ENCODE measurements at regions of chr2 and their contacts with region 1.

Region 1: DNA sequence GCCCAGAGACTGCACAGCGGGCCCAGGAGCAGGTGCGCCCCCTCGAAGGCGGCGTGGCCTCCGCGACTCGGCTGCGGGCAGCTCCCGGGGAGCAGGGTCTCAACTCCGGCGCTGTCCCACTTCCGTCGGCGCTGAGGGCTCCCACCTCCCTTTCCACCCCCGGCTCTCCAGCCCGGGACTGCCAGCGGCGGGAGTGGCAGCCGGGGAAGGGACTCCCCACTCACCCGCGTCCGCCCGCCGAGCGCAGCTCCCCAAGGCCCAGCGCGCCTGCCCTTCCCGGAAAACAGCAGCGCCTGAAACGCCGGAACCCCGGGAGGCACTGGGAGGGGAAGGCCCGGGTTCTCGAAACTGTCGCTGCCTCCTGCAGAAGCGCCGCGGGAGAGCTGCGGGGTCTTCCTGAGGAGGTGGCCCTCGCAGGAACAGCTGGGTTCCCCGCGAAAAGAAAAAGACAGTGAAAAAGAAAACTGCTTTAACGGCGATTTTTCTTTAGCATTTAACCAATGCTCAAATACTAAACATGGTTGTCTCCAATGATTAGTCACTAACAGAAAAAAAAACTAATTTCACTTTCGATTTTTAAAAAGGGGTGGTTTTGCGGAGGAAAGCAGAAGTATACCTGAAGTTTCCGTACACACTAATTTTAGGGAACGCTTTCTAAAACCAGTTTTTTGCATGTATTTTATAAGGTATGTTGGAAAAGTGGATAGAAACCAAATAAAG is at the start of gene NMI:
- DNase-seq: peak; percentile 76
- ATAC-seq: peak; percentile 74
- H3K4me3 ChIP-seq: peak within 1 kb of the TSS; percentile 86
- H3K27ac ChIP-seq: peak within 1 kb of the TSS; percentile 98
- H3K4me1 ChIP-seq: peaks cover 4% of the 10 kb centered on the region; the same call in 1 of the 2 replicates
- H3K27me3 ChIP-seq: no peaks in the 10 kb centered on the region
- CTCF ChIP-seq: no peak
- EP300 ChIP-seq: no peak
- POLR2A ChIP-seq: peak; percentile 81
- RAD21 ChIP-seq: no peak
- polyA plus RNA-seq, gene NMI: 43.3 to 48.4 TPM

Region 2: DNA sequence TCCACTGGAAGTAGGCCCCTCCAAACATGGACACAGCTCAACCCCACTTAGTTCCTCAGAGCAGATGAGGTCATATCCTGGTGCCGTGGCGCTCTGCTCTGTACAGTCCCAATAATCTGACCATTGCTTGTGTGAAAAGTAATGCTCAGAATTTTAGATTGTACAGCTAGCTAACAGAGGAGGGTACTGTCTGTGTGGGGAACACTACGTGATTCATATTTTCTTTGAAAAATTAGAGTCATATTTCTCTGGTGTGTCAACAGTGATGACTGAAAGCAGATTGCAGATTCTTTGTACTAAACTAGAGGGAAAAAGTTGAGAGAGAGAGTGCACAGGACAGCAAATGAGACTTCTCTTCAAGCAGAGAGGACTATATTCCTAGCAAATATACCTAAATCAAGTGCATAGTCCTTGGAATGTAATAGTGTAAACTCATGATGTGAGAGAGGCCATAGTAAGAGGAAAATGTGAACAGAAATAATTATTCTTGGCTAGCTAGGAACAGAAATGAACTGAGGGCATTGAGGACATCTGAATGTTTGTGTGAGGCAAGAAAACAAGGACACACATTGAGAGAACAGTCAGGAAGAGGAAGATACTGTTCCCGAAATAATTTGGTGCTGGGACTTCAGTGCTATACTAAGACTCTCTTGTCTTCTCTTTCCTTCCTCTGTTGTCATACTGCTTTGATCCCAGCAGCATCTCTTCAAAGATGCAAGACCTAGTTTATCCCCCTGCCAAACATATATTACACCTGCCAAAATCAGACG is 645.0 kb before region 1 on chr2:
- CTCF ChIA-PET with region 1: no interaction called
- POLR2A ChIA-PET with region 1: no interaction called
- RAD21 ChIA-PET with region 1: no interaction called
- SMC1A ChIA-PET with region 1: no interaction called
- in situ Hi-C with region 1: no loop called
- intact Hi-C with region 1: no loop called
- DNase-seq: no peak
- ATAC-seq: no peak
- H3K4me3 ChIP-seq: no peak overlapping the region
- H3K27ac ChIP-seq: no peak overlapping the region
- H3K4me1 ChIP-seq: no peaks in the 10 kb centered on the region
- H3K27me3 ChIP-seq: no peaks in the 10 kb centered on the region; a peak in 1 of 4 replicates
- CTCF ChIP-seq: no peak
- EP300 ChIP-seq: no peak
- POLR2A ChIP-seq: no peak
- RAD21 ChIP-seq: no peak

Region 3: DNA sequence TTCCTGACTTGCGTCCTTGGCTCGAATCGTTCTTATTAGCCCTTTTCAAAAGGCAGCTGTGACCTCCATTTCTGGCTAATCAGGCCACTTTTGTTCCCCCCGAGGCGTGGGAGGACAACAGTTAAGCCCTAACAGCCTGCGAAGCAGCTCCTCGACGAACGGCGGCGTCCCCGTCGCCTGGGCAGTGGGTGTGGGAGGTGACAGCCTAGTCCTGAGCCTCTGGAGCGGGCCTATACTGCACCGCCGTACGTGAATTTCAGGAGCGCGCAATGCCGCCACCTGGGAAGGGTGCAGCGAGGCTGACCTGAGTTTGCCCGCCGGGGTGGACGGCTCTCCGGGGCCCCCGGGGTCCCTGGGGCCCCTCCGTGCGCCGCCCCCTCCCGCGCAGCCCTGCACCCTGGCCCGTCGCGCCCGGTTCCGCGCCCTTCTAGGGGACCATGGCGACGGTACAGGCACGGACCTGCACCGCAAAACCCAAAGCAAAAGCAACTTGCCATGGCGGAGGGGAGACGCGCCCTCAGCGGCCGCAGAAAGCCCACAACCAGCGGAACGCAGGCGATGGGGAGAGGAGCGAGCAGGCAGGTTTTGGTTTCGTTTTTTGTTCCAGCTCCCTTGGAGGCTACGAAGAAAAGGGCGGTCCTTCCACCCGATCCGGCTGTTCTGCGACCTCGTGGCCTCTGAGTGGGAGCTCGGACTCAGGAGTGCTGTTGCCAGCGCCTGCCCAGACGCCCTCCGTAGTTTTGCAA is 28.1 kb before region 1 on chr2 and contains the start of gene RBM43:
- CTCF ChIA-PET with region 1: interaction called, 5 read pairs
- POLR2A ChIA-PET with region 1: interaction called, 9 read pairs
- RAD21 ChIA-PET with region 1: interaction called, 15 read pairs
- SMC1A ChIA-PET with region 1: interaction called, 3 read pairs
- in situ Hi-C with region 1: no loop called
- intact Hi-C with region 1: loop called (anchors 1 kb)
- DNase-seq: peak; percentile 59
- ATAC-seq: peak; percentile 95
- H3K4me3 ChIP-seq: peak within 1 kb of the TSS; percentile 84
- H3K27ac ChIP-seq: peak within 1 kb of the TSS; percentile 86
- H3K4me1 ChIP-seq: no peaks in the 10 kb centered on the region
- H3K27me3 ChIP-seq: no peaks in the 10 kb centered on the region
- CTCF ChIP-seq: peak in 1 of 3 experiments; percentile 21; a peak in 1 of 6 replicates
- EP300 ChIP-seq: no peak
- POLR2A ChIP-seq: peak; percentile 88
- RAD21 ChIP-seq: no peak
- polyA plus RNA-seq, gene RBM43: 0.86 to 0.93 TPM

Region 4: GRCh38 chr2:151363709-151364108 is 74.2 kb after region 1 on chr2:
- CTCF ChIA-PET with region 1: no interaction called
- POLR2A ChIA-PET with region 1: interaction called, 3 read pairs
- RAD21 ChIA-PET with region 1: interaction called, 6 read pairs
- SMC1A ChIA-PET with region 1: interaction called, 3 read pairs
- in situ Hi-C with region 1: no loop called
- intact Hi-C with region 1: loop called (anchors 1 kb)
- DNase-seq: peak; percentile 45
- ATAC-seq: peak; percentile 88
- H3K4me3 ChIP-seq: no peak overlapping the region
- H3K27ac ChIP-seq: no peak overlapping the region
- H3K4me1 ChIP-seq: no peaks in the 10 kb centered on the region
- H3K27me3 ChIP-seq: no peaks in the 10 kb centered on the region
- CTCF ChIP-seq: no peak
- EP300 ChIP-seq: 0 out of 4 replicates have a peak, but pooled peaks of 1 of the 2 experiments have one; percentile 14
- POLR2A ChIP-seq: no peak
- RAD21 ChIP-seq: no peak

Region 5: GRCh38 chr2:151409601-151410484 is 120.3 kb after region 1 on chr2 and contains the start of gene RIF1:
- CTCF ChIA-PET with region 1: no interaction called
- POLR2A ChIA-PET with region 1: interaction called, 5 read pairs
- RAD21 ChIA-PET with region 1: no interaction called
- SMC1A ChIA-PET with region 1: interaction called, 5 read pairs
- in situ Hi-C with region 1: loop called (anchors 25 kb)
- intact Hi-C with region 1: loop called (anchors 1 kb)
- DNase-seq: peak; percentile 45
- ATAC-seq: peak; percentile 95
- H3K4me3 ChIP-seq: peak within 1 kb of the TSS; percentile 97
- H3K27ac ChIP-seq: peak within 1 kb of the TSS; percentile 91
- H3K4me1 ChIP-seq: no peaks in the 10 kb centered on the region
- H3K27me3 ChIP-seq: no peaks in the 10 kb centered on the region; a peak in 1 of 4 replicates
- CTCF ChIP-seq: peak; percentile 39 to 74 (median 41)
- EP300 ChIP-seq: no peak
- POLR2A ChIP-seq: peak; percentile 83
- RAD21 ChIP-seq: no peak
- polyA plus RNA-seq, gene RIF1: 6.3 to 9.7 TPM

Region 6: GRCh38 chr2:151437630-151438029 is 148.1 kb after region 1 on chr2:
- CTCF ChIA-PET with region 1: interaction called, 4 read pairs
- POLR2A ChIA-PET with region 1: interaction called, 3 read pairs
- RAD21 ChIA-PET with region 1: no interaction called
- SMC1A ChIA-PET with region 1: no interaction called
- in situ Hi-C with region 1: no loop called
- intact Hi-C with region 1: loop called (anchors 5 kb)
- DNase-seq: no peak
- ATAC-seq: peak; percentile 74
- H3K4me3 ChIP-seq: no peak overlapping the region
- H3K27ac ChIP-seq: no peak overlapping the region
- H3K4me1 ChIP-seq: no peaks in the 10 kb centered on the region
- H3K27me3 ChIP-seq: no peaks in the 10 kb centered on the region
- CTCF ChIP-seq: peak in 2 of 3 experiments; percentile 16 to 43; a peak in 4 of 6 replicates
- EP300 ChIP-seq: no peak
- POLR2A ChIP-seq: no peak
- RAD21 ChIP-seq: peak; percentile 16; the same call in 1 of the 2 replicates